Lower lobe of right lung (tissue), 2 donors: ENCODE measurements at regions of chr6 and their contacts with region 1.

Region 1: GRCh38 chr6:133512410-133513016 is 271.4 kb downstream of the EYA4 start:
- DNase-seq: peak; percentile 39
- ATAC-seq: peak in 1 of 2 donors; percentile 70
- H3K4me3 ChIP-seq: no peak overlapping the region
- H3K27ac ChIP-seq: no peak overlapping the region
- H3K4me1 ChIP-seq: no peaks in the 10 kb centered on the region
- H3K27me3 ChIP-seq: no peaks in the 10 kb centered on the region
- CTCF ChIP-seq: peak; percentile 54

Region 2: DNA sequence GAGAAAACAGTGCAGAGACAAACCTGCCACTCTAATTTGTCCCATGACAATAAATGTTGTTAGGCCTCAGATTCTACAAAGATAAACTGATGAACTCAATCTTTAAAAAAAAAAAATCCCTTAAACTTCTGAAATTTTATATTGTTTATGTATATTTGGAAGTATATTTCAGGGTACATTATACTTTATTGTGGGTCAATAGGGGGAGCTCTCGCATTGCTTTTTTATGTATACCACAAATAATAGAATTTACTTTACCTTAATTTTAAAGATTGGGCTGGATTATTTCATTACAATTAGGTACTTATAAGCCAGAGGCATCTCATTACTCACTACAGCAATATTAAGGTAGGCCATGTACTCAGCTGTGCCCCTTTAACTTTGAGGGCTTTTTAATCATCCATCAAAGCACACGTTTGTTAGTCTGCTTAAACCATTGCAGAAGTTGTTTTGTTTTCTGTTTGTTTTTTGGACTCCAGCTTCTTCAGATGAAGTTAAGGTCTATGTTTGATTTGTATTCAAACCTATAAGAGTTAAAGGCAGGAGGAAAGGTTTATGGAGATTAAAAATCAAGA is 327.6 kb before region 1 on chr6:
- intact Hi-C with region 1: loop called (anchors 10 kb)
- DNase-seq: no peak
- ATAC-seq: no peak
- H3K4me3 ChIP-seq: no peak overlapping the region
- H3K27ac ChIP-seq: no peak overlapping the region
- H3K4me1 ChIP-seq: no peaks in the 10 kb centered on the region
- H3K27me3 ChIP-seq: no peaks in the 10 kb centered on the region
- CTCF ChIP-seq: peak; percentile 50

Region 3: DNA sequence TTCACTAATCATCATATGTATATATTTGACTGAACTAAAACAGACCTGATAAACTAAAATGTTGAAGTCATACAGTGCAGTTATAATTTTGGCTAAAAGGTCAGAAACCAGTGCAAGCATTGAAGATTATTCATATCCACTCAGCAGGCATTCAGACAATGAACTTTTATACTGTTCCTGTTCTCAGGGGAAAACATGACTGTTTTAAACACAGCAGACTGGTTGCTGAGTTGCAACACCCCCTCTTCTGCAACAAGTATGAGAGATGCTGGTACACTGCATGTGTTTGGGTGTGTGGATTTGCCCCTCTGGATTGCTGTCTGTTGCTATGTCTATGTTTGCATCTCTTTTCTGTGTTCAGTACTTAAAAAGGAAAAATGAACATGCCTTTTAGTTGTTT is 64.6 kb before region 1 on chr6:
- intact Hi-C with region 1: no loop called
- DNase-seq: no peak
- ATAC-seq: no peak
- H3K4me3 ChIP-seq: no peak overlapping the region
- H3K27ac ChIP-seq: no peak overlapping the region
- H3K4me1 ChIP-seq: no peaks in the 10 kb centered on the region
- H3K27me3 ChIP-seq: no peaks in the 10 kb centered on the region
- CTCF ChIP-seq: no peak

Region 4: GRCh38 chr6:133768656-133769295 is 256.3 kb after region 1 on chr6:
- intact Hi-C with region 1: no loop called
- DNase-seq: no peak
- ATAC-seq: no peak
- H3K4me3 ChIP-seq: no peak overlapping the region
- H3K27ac ChIP-seq: no peak overlapping the region
- H3K4me1 ChIP-seq: no peaks in the 10 kb centered on the region
- H3K27me3 ChIP-seq: no peaks in the 10 kb centered on the region
- CTCF ChIP-seq: no peak